ENCODE measurements at regions of chr20 and their contacts with region 1.

Region 1: DNA sequence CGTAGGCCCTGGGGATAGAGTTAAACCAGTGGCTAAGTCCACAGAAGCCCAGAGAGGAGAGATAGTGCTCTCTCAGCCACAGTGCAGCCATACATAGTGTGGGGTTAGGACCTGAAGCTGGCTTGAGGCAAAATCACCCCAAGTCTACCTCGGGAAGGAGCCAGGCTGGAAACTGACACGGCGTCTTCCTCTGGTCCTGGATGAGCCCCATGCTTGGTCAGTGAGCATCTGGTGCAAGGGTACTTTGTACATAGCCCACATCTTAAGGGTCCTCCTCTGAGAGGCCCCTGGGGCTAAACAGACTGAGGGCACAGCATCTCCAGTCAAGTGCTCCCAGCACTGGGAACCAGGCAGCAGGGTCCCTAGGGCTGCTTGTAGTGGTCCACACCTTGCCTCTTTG is 45.6 kb downstream of the CDH26 start:
- DNase-seq: no peak
- H3K4me3 Mint-ChIP-seq: no peak overlapping the region
- H3K27ac Mint-ChIP-seq: no peak overlapping the region
- H3K4me1 Mint-ChIP-seq: no peaks in the 10 kb centered on the region
- H3K27me3 Mint-ChIP-seq: peaks cover 7% of the 10 kb centered on the region

Region 2: DNA sequence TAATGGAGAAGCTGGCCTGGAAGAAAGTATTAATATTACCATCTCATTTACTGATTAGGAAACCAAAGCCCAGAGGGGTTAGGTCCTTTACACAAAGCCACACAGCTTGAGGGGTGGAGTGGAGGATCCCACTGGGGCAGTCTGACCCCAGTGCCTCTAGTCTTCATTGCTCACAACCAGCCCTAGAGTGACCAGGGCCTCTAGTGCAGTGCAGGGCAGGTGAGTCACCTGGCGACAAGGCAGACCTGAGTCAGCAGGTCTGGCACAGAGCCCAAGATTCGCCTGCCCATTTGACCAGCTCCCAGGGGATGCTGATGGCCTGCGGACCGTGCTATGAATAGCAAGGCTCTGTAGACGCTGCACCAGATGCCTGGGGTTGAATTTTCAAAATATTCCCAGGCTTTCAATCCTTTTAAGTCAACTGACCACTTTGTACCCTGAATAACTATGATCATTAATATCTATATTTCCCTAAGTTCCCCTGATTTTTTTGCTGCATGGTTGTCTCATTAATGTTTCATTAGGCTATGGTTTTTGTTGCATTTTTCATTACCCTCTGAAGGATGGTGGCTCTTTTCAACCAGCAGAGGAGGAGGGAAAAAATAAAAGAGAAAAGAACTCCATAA is 15.6 kb before region 1 on chr20:
- intact Hi-C with region 1: loop called (anchors 1 kb)
- DNase-seq: no peak
- H3K4me3 Mint-ChIP-seq: no peak overlapping the region
- H3K27ac Mint-ChIP-seq: no peak overlapping the region
- H3K4me1 Mint-ChIP-seq: no peaks in the 10 kb centered on the region
- H3K27me3 Mint-ChIP-seq: no peaks in the 10 kb centered on the region